Calu3 (cell line): ENCODE measurements at regions of chr9 and their contacts with region 1.

Region 1: GRCh38 chr9:93962561-93963440 is 7.6 kb upstream of the BARX1 start:
- DNase-seq: peak; percentile 71
- H3K4me3 Mint-ChIP-seq: peak overlapping the region; percentile 11
- H3K27ac Mint-ChIP-seq: no peak overlapping the region
- H3K4me1 Mint-ChIP-seq: no peaks in the 10 kb centered on the region
- H3K27me3 Mint-ChIP-seq: peaks cover 30% of the 10 kb centered on the region
- CTCF ChIP-seq: peak; percentile 56

Region 2: GRCh38 chr9:93682232-93682968 is 280.4 kb before region 1 on chr9:
- CTCF ChIA-PET with region 1: interaction called, 3 read pairs
- intact Hi-C with region 1: loop called (anchors 2 kb)
- DNase-seq: peak; percentile 74
- H3K4me3 Mint-ChIP-seq: no peak overlapping the region
- H3K27ac Mint-ChIP-seq: no peak overlapping the region
- H3K4me1 Mint-ChIP-seq: peaks cover 9% of the 10 kb centered on the region
- H3K27me3 Mint-ChIP-seq: peaks cover 24% of the 10 kb centered on the region
- CTCF ChIP-seq: peak; percentile 67

Region 3: GRCh38 chr9:93827545-93828330 is 135.1 kb before region 1 on chr9:
- CTCF ChIA-PET with region 1: no interaction called
- intact Hi-C with region 1: loop called (anchors 2 kb)
- DNase-seq: peak; percentile 69
- H3K4me3 Mint-ChIP-seq: peak overlapping the region; percentile 48
- H3K27ac Mint-ChIP-seq: no peak overlapping the region
- H3K4me1 Mint-ChIP-seq: no peaks in the 10 kb centered on the region
- H3K27me3 Mint-ChIP-seq: peaks cover 43% of the 10 kb centered on the region
- CTCF ChIP-seq: peak; percentile 67

Region 4: DNA sequence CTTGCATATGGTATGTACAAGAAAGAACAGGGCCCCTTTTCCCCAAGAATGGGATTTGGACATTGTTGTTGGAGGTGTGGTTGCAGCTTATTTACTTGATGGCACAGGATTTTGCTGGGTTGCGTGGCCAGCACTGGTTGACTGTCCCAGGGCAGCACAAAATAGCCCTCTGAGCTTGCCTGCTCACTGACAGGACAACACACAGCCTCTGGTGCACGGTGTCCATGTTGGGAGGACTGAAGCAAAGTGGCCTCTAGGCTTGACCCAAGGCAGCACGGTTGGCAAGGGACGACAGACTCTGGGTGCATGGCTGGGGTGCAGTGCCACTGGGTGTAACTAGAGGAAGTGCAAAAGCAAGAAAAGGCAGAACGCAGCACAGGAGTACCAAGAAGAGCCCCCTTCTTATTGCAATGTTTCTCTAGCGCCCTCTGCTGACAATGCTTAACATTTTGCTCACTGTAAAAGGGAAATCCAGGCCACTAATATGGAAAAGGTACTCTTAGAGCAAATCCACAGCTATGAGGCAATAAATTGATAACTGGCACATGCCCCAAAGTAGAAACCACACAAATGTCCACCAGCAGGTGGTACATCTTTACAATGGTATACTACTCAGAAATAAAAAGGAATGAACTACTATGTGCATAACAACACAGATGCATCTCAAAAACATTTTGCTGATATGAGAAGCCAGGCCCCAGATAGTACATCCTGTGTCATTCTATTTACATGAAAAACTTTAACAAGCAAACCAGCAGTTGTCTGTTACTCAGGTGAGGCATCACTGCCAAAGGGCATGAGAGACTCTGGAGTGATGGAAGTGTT is 39.7 kb after region 1 on chr9:
- CTCF ChIA-PET with region 1: no interaction called
- intact Hi-C with region 1: no loop called
- DNase-seq: peak; percentile 30
- H3K4me3 Mint-ChIP-seq: no peak overlapping the region
- H3K27ac Mint-ChIP-seq: no peak overlapping the region
- H3K4me1 Mint-ChIP-seq: no peaks in the 10 kb centered on the region
- H3K27me3 Mint-ChIP-seq: peaks cover 21% of the 10 kb centered on the region
- CTCF ChIP-seq: peak; percentile 42

Region 5: GRCh38 chr9:94259077-94259892 is 296.5 kb after region 1 on chr9 and contains the start of gene ZNF169:
- CTCF ChIA-PET with region 1: no interaction called
- intact Hi-C with region 1: no loop called
- DNase-seq: peak; percentile 85
- H3K4me3 Mint-ChIP-seq: peak within 1 kb of the TSS; percentile 94
- H3K27ac Mint-ChIP-seq: peak within 1 kb of the TSS; percentile 73
- H3K4me1 Mint-ChIP-seq: no peaks in the 10 kb centered on the region
- H3K27me3 Mint-ChIP-seq: peaks cover 14% of the 10 kb centered on the region
- CTCF ChIP-seq: no peak
- total RNA-seq, gene ZNF169: 5.2 and 5.8 TPM in 2 replicates